Activated CD8-positive, alpha-beta T cell treated with anti-CD3 and anti-CD28 coated beads for 36 hours (primary cell): ENCODE measurements at regions of chr20 and their contacts with region 1.

Region 1: GRCh38 chr20:50165684-50166554 is 12.4 kb upstream of the PEDS1 start:
- DNase-seq: peak; percentile 95
- ATAC-seq: peak; percentile 98
- H3K4me3 Mint-ChIP-seq: peak overlapping the region; percentile 55
- H3K27ac Mint-ChIP-seq: peak overlapping the region; percentile 56
- H3K4me1 Mint-ChIP-seq: peaks cover 12% of the 10 kb centered on the region
- H3K27me3 Mint-ChIP-seq: peaks cover 4% of the 10 kb centered on the region
- CTCF ChIP-seq: no peak

Region 2: DNA sequence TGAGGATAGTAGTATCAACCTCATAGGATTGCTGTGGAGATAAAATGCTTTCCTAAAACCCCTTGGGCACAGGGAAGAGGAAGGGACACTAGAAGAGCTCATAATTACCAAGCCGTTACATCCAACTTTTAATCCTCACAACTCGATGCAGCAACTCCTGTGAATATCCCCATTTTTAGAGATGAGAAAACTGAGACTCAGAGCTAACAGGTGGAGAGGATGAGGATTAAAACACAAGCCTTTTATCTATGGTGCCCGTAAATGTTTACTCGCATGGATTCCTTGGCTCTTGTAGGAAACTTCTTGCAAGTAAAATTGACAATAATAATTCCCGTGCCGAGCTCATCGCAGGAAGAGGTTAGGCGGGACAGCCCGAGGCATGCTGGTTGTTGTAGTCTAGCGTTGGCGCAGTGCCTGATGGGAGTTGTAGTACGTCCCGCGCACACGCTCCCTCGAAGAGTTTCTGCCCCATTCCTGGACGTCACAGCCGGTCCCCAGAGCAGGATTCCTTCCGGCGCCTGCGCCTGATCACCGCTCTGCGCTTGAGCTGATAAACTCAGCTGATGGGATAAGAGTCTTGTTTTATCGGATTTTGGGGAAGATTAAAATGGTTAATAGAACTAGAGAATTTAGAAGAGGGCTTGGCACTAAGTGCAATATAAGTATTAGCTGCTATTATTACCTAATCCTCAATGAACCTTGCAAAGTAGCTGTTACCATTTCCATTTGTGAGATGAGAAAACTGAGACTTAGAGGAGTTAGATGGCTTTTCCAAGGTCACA is 50.1 kb before region 1 on chr20:
- CTCF ChIA-PET with region 1: interaction called, 203 read pairs
- POLR2A ChIA-PET with region 1: interaction called, 4 read pairs
- intact Hi-C with region 1: loop called (anchors 2 kb)
- DNase-seq: peak; percentile 96
- ATAC-seq: peak; percentile 79
- H3K4me3 Mint-ChIP-seq: peak overlapping the region; percentile 94
- H3K27ac Mint-ChIP-seq: peak overlapping the region; percentile 93
- H3K4me1 Mint-ChIP-seq: peaks cover 44% of the 10 kb centered on the region
- H3K27me3 Mint-ChIP-seq: no peaks in the 10 kb centered on the region
- CTCF ChIP-seq: no peak

Region 3: GRCh38 chr20:50133474-50134217 is 32.3 kb before region 1 on chr20:
- CTCF ChIA-PET with region 1: interaction called, 15 read pairs
- POLR2A ChIA-PET with region 1: no interaction called
- intact Hi-C with region 1: no loop called
- DNase-seq: no peak
- ATAC-seq: peak; percentile 50
- H3K4me3 Mint-ChIP-seq: no peak overlapping the region
- H3K27ac Mint-ChIP-seq: no peak overlapping the region
- H3K4me1 Mint-ChIP-seq: peaks cover 12% of the 10 kb centered on the region
- H3K27me3 Mint-ChIP-seq: no peaks in the 10 kb centered on the region
- CTCF ChIP-seq: peak; percentile 19

Region 4: DNA sequence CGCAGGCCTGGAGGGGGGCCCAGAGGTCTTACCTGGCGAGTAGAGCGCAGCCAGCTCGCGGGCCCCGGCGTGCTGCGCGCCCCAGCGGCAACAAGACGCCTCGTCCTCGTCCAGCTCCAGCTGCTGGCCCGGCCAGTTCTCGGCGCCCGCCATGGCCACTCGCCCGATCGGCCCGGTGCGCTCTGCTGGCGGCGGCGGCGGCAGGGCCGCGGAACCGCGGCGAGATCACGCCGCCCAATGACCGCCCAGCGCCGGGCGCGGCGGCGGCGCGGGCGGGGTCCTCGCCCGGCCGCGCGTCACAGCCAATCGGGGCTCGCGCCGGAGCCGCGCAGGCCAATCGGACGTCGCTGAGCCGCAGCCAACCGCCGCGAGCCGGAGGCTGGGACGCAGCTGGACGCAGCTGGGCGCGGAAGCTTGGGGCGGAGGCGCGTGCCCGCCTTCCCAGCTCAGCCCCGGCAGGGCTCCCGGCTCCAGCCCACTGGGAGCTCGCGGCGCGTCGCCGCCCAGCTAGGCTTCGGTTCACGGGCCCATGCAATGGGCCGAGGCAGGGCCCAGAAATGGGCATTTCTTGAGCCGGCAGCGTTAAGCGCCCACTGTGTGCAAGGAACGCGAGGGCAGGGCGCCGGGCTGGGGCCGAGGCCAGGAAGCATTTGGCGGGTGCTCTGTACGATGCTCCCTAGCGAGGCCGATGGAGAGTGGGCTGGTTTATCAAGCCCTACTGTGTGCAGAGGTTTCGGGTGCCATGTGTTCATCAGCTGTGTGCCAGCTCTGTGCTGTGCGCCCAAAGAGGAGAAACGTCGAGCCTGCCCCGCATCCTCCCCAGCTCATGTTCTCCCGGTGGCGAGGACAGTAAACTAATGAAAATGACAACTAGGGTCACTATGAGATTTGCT is 12.2 kb before region 1 on chr20 and contains the start of gene PEDS1:
- CTCF ChIA-PET with region 1: interaction called, 34 read pairs
- POLR2A ChIA-PET with region 1: interaction called, 9 read pairs
- intact Hi-C with region 1: no loop called
- DNase-seq: peak; percentile 84
- ATAC-seq: peak; percentile 96
- H3K4me3 Mint-ChIP-seq: peak within 1 kb of the TSS; percentile 85
- H3K27ac Mint-ChIP-seq: peak within 1 kb of the TSS; percentile 84
- H3K4me1 Mint-ChIP-seq: peaks cover 35% of the 10 kb centered on the region
- H3K27me3 Mint-ChIP-seq: no peaks in the 10 kb centered on the region
- CTCF ChIP-seq: no peak
- total RNA-seq, gene PEDS1: 16.0 to 17.3 TPM

Region 5: GRCh38 chr20:50189681-50190582 is 24.0 kb after region 1 on chr20:
- CTCF ChIA-PET with region 1: interaction called, 11 read pairs
- POLR2A ChIA-PET with region 1: interaction called, 3 read pairs
- intact Hi-C with region 1: no loop called
- DNase-seq: peak; percentile 87
- ATAC-seq: peak; percentile 64
- H3K4me3 Mint-ChIP-seq: peak overlapping the region; percentile 35
- H3K27ac Mint-ChIP-seq: no peak overlapping the region
- H3K4me1 Mint-ChIP-seq: peaks cover 17% of the 10 kb centered on the region
- H3K27me3 Mint-ChIP-seq: peaks cover 9% of the 10 kb centered on the region
- CTCF ChIP-seq: peak; percentile 68